ENCODE measurements at regions of chr4 and their contacts with region 1.

Region 1: GRCh38 chr4:166165829-166166420 is 292.9 kb downstream of the TLL1 start:
- DNase-seq: peak; percentile 3
- ATAC-seq: peak; percentile 74
- H3K4me3 Mint-ChIP-seq: no peak overlapping the region
- H3K27ac Mint-ChIP-seq: no peak overlapping the region
- H3K4me1 Mint-ChIP-seq: no peaks in the 10 kb centered on the region
- H3K27me3 Mint-ChIP-seq: peaks cover 2% of the 10 kb centered on the region
- CTCF ChIP-seq: peak; percentile 63

Region 2: GRCh38 chr4:165765053-165765452 is 400.9 kb before region 1 on chr4:
- CTCF ChIA-PET with region 1: no interaction called
- POLR2A ChIA-PET with region 1: no interaction called
- intact Hi-C with region 1: no loop called
- DNase-seq: no peak
- ATAC-seq: no peak
- H3K4me3 Mint-ChIP-seq: no peak overlapping the region
- H3K27ac Mint-ChIP-seq: no peak overlapping the region
- H3K4me1 Mint-ChIP-seq: no peaks in the 10 kb centered on the region
- H3K27me3 Mint-ChIP-seq: no peaks in the 10 kb centered on the region
- CTCF ChIP-seq: no peak

Region 3: DNA sequence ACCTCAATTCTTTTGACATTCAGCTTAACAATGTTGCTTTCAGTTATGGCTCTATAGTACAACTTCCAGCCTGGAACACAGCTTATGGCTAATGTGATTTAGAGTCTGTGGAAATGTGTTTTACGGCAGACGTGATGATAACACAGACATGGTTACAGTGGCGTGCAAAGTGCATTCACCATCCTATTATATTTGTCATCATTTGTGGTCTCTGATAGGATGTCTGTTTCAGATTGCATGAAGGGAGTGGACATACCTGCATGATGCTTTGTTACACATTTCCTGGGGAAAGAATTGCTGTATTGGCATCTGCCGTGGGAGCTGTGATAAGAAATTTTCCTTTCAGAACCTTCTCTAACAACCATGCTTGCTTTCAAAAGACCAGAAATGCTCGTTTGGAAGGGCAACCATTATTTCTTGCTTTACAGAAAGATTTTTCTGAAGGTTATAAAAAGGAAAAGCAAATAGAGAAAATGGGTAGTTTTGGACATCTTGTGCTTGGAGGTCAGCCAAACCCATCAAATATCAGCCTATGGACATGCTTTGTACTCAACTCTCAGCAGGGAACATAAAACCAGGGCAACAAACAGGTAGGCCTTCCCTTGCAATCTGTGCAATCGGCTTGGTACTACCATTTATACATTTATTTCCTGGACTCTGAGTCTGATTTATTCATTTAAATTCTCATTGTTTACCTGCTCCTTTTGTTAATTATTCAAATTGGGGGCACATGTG is 19.0 kb before region 1 on chr4:
- CTCF ChIA-PET with region 1: no interaction called
- POLR2A ChIA-PET with region 1: no interaction called
- intact Hi-C with region 1: no loop called
- DNase-seq: no peak
- ATAC-seq: no peak
- H3K4me3 Mint-ChIP-seq: no peak overlapping the region
- H3K27ac Mint-ChIP-seq: no peak overlapping the region
- H3K4me1 Mint-ChIP-seq: no peaks in the 10 kb centered on the region
- H3K27me3 Mint-ChIP-seq: no peaks in the 10 kb centered on the region
- CTCF ChIP-seq: no peak

Region 4: DNA sequence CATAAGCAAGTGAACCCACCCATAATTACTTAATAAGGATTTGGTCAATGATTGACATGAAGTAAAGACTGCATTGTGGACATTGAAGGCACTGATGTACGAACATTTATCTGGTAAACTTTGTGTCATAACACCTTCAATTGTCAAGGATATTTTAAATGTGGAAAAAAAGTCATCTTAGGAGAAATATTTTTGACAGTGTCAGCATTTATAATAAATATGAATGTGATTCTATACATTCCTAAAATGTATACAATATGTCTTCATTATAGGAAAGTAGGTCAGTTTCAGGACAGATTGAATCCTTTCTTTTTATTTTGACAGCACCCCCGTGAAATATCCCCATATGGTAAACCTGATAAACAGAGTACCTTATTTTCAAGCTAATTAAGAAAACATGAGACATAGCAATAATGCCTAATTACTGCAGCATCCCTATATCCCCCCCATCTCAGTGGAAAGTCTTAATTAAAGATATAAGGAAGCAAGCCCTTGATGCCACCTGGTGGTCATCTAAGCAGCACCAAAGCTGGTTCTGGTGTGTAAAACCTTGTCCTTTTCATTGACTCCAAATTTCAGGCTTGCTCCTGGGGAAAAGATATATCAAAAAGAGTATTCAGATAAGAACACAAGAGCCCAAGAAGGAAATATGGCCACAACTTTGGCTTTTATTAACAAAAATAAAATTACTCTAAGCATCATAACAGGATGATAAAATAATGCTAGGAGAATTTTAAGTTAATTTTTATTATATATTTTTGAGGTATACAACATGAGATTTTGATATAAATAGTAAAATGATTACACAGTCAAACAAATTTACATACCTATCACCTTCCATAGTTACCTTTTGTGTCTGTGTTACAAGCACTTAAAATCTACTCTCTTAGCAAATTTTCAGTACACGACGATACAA is 86.8 kb after region 1 on chr4:
- CTCF ChIA-PET with region 1: interaction called, 3 read pairs
- POLR2A ChIA-PET with region 1: no interaction called
- intact Hi-C with region 1: loop called (anchors 10 kb)
- DNase-seq: peak; percentile 15
- ATAC-seq: no peak
- H3K4me3 Mint-ChIP-seq: no peak overlapping the region
- H3K27ac Mint-ChIP-seq: no peak overlapping the region
- H3K4me1 Mint-ChIP-seq: no peaks in the 10 kb centered on the region
- H3K27me3 Mint-ChIP-seq: no peaks in the 10 kb centered on the region
- CTCF ChIP-seq: no peak